ENCODE measurements at regions of chr2 and their contacts with region 1.

Region 1: DNA sequence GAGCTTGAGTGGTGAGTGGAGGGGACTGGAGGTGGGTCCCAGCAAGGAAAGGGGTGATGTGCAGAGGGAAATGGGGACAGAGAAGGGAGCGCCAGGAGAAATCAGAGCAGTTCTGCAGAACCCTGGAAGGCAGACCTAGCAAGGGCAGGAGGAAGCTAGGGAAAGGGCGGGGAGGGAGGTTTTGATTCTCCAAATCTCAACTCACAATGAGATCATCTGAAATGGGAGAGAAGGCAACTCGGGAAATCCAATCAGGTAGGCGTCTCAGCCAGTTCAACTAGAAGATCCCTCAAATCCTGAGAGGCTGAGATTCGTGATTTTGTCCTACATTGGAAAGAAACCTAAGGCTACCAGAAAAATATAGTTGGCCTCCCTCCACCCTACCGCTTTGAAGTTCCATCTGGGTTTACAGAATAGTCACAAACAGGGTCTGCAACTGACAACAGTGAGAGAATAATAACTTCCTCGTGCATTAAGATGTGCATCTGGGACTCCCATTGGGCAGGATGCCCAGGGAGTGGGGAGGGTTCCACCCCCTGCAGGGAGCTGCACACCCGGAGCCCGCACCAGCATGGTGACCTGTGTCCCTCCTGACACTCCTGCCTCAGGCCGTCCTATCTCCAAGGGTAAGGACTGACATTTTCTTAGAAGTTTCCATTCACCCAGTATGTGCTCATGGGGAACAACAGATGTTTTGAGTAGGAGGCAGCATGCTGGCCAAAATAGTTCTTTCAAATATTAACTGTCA is 113.3 kb upstream of the ODC1 start:
- DNase-seq: no peak
- ATAC-seq: no peak; the same call in 1 of the 2 replicates
- H3K4me3 ChIP-seq: no peak overlapping the region
- H3K27ac ChIP-seq: no peak overlapping the region
- H3K4me1 ChIP-seq: no peaks in the 10 kb centered on the region
- H3K27me3 ChIP-seq: no peaks in the 10 kb centered on the region
- CTCF ChIP-seq: no peak
- POLR2A ChIP-seq: no peak
- RAD21 ChIP-seq: no peak

Region 2: GRCh38 chr2:10614939-10615338 is 53.5 kb after region 1 on chr2:
- CTCF ChIA-PET with region 1: no interaction called
- POLR2A ChIA-PET with region 1: no interaction called
- dilution Hi-C with region 1: no loop called
- in situ Hi-C with region 1: no loop called
- intact Hi-C with region 1: loop called (anchors 2 kb)
- DNase-seq: peak; percentile 46
- ATAC-seq: no peak; the same call in none of the 2 replicates
- H3K4me3 ChIP-seq: no peak overlapping the region
- H3K27ac ChIP-seq: no peak overlapping the region
- H3K4me1 ChIP-seq: peaks cover 2% of the 10 kb centered on the region
- H3K27me3 ChIP-seq: no peaks in the 10 kb centered on the region
- CTCF ChIP-seq: no peak
- POLR2A ChIP-seq: no peak
- RAD21 ChIP-seq: no peak